ENCODE measurements at regions of chr11 and their contacts with region 1.

Region 1: DNA sequence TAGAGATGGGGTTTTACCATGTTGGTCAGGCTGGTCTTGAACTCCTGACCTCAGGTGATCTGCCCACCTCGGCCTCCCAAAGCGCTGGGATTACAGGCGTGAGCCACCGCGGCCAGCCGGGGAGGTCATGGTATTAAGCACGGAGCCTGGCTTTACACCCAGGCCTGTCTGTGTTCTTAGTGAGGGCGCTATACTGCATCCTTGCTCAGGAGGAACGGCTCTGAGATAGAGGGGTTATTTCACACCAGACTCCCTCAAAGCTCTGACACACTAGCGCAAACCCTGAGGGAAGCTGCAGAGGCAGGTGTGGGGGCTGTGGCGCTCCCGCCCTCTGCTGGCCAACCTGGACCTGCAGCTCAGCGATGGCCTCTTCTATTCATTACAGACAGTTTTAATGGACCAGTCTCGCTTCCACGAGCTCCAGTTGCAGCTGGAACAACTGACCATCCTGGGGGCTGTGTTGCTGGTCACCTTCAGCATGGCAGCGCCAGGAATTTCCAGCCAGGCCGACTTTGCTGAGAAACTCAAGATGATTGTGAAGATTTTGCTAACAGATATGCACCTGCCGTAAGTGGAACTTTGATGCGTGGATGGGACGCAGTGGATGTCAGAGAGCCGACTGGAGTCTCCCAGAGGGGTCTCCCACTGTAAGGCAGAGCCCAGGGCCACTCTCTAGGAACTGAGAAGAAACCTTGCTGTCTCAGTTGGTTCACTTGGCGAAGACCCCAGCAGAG is 26.2 kb downstream of the TCP11L1 start:
- DNase-seq: peak; percentile 64
- ATAC-seq: peak; percentile 80
- H3K4me3 ChIP-seq: no peak overlapping the region
- H3K27ac ChIP-seq: no peak overlapping the region
- H3K4me1 ChIP-seq: peaks cover 7% of the 10 kb centered on the region; the same call in 1 of the 2 replicates
- H3K27me3 ChIP-seq: no peaks in the 10 kb centered on the region
- CTCF ChIP-seq: peak; percentile 91
- POLR2A ChIP-seq: no peak
- RAD21 ChIP-seq: peak; percentile 93

Region 2: DNA sequence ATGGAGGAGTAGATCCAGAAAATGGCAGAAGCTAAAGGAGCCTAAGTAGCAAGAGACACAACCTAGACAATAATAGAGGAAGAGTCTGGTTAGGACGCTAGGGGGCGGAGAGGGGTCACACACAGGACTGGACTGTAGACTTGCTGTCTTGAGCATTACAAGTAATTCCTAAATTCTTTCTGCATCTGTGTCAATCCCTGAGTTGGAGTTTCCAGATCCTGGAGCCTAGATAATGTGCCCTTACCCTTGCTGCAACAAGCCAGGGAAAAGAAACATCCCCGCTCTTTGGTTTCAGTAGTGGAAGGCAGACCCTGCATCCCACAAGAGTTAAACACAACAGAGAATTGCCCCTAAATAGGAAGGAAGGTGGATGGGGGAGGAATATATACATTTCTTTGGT is 256.3 kb before region 1 on chr11:
- CTCF ChIA-PET with region 1: interaction called, 6 read pairs
- POLR2A ChIA-PET with region 1: no interaction called
- dilution Hi-C with region 1: no loop called
- in situ Hi-C with region 1: no loop called
- intact Hi-C with region 1: loop called (anchors 1 kb)
- DNase-seq: peak; percentile 72
- ATAC-seq: peak; percentile 100
- H3K4me3 ChIP-seq: no peak overlapping the region
- H3K27ac ChIP-seq: no peak overlapping the region
- H3K4me1 ChIP-seq: no peaks in the 10 kb centered on the region
- H3K27me3 ChIP-seq: no peaks in the 10 kb centered on the region; the same call in 1 of the 2 replicates
- CTCF ChIP-seq: peak; percentile 73
- POLR2A ChIP-seq: no peak
- RAD21 ChIP-seq: peak; percentile 76

Region 3: GRCh38 chr11:32893343-32894148 is 172.1 kb before region 1 on chr11:
- CTCF ChIA-PET with region 1: interaction called, 4 read pairs
- POLR2A ChIA-PET with region 1: interaction called, 5 read pairs
- dilution Hi-C with region 1: no loop called
- in situ Hi-C with region 1: no loop called
- intact Hi-C with region 1: loop called (anchors 5 kb)
- DNase-seq: peak; percentile 26
- ATAC-seq: peak; percentile 45
- H3K4me3 ChIP-seq: peak overlapping the region; percentile 79
- H3K27ac ChIP-seq: peak overlapping the region; percentile 58
- H3K4me1 ChIP-seq: peaks cover 2% of the 10 kb centered on the region; the same call in 1 of the 2 replicates
- H3K27me3 ChIP-seq: no peaks in the 10 kb centered on the region
- CTCF ChIP-seq: peak; percentile 51
- POLR2A ChIP-seq: 0 out of 2 replicates have a peak, but pooled peaks have one; percentile 8
- RAD21 ChIP-seq: no peak

Region 4: DNA sequence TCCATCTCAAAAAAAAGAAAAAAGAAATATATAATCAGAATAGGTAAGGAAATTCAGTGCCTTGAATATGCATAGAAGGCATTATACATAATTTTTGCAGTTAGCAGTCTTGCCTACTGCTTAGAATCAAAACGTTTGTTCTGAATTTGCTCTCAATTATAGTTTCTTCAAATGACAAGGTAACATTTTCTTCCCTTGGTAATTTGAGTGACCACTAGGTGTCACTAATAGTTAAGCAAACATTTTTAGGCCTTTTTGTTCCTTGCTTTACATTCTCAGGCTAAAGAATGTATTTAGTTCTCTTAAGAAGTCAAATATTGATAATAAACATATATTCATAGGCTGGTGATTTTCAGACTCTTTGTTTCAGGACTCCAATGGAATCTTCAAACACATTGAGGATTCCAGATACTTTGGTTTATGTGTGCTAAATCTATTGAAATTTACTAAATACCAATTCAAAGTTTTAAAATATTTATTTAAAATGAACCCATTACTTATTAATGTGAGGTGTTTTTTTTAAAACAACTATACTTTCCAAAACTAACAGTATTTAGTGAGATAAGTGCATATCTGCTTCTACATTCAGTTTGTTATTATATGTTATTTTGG is 105.0 kb before region 1 on chr11:
- CTCF ChIA-PET with region 1: interaction called, 16 read pairs
- POLR2A ChIA-PET with region 1: no interaction called
- dilution Hi-C with region 1: no loop called
- in situ Hi-C with region 1: loop called (anchors 5 kb)
- intact Hi-C with region 1: loop called (anchors 1 kb)
- DNase-seq: peak; percentile 71
- ATAC-seq: peak; percentile 61; the same call in 1 of the 2 replicates
- H3K4me3 ChIP-seq: no peak overlapping the region
- H3K27ac ChIP-seq: no peak overlapping the region
- H3K4me1 ChIP-seq: no peaks in the 10 kb centered on the region
- H3K27me3 ChIP-seq: no peaks in the 10 kb centered on the region
- CTCF ChIP-seq: peak; percentile 78
- POLR2A ChIP-seq: no peak
- RAD21 ChIP-seq: peak; percentile 85

Region 5: GRCh38 chr11:33157103-33158027 is 91.8 kb after region 1 on chr11:
- CTCF ChIA-PET with region 1: no interaction called
- POLR2A ChIA-PET with region 1: no interaction called
- dilution Hi-C with region 1: no loop called
- in situ Hi-C with region 1: no loop called
- intact Hi-C with region 1: no loop called
- DNase-seq: no peak
- ATAC-seq: no peak
- H3K4me3 ChIP-seq: no peak overlapping the region
- H3K27ac ChIP-seq: no peak overlapping the region
- H3K4me1 ChIP-seq: peaks cover 6% of the 10 kb centered on the region
- H3K27me3 ChIP-seq: no peaks in the 10 kb centered on the region
- CTCF ChIP-seq: no peak
- POLR2A ChIP-seq: no peak
- RAD21 ChIP-seq: no peak

Measured in IMR-90 (cell line).